ENCODE measurements at regions of chr4 and their contacts with region 1.

Region 1: DNA sequence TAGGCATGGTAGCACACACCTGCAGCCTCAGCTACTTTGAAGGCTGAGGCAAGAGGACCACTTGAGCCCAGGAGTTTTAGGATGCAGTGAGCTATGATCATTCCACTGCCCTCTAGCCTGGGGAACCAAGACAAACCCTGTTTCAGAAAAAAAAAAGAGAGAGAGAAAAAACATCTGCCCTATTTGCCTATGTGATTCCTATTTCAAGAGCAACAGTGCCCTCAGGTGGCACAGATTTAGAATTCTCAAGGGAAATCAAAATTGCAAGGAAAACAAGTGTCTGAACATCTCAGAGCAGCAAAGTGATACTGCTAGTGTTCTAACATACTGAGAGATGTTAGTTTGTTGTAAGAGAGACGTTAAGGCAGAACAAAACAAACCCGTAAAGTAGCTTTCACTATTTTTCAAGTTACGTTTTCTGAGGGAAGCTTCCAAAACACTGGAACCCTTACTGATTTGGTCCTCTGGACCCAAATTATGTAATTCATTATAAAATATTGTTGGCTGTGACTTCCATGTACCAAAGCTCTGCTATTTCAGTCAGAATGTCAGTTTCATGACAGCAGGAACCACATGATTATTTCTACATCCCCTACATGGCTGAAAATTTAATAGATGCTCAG is 7.9 kb downstream of the BDH2 start:
- DNase-seq: no peak
- ATAC-seq: no peak
- H3K4me3 ChIP-seq: no peak overlapping the region
- H3K27ac ChIP-seq: no peak overlapping the region
- H3K4me1 ChIP-seq: peaks cover 0 to 14% (median 0%) of the 10 kb centered on the region in 12 donors
- H3K27me3 ChIP-seq: no peaks in the 10 kb centered on the region
- CTCF ChIP-seq: peak in 11 of 12 donors; percentile 12 to 55 (median 42)
- POLR2A ChIP-seq: no peak

Region 2: GRCh38 chr4:102610007-102610406 is 481.7 kb before region 1 on chr4:
- intact Hi-C with region 1: loop called in 3 of 10 experiments (anchors 5 to 10 kb)
- DNase-seq: no peak
- ATAC-seq: no peak
- H3K4me3 ChIP-seq: no peak overlapping the region
- H3K27ac ChIP-seq: no peak overlapping the region
- H3K4me1 ChIP-seq: peaks cover 0 to 31% (median 0%) of the 10 kb centered on the region in 12 donors
- H3K27me3 ChIP-seq: no peaks in the 10 kb centered on the region
- CTCF ChIP-seq: peak in 4 of 12 donors; percentile 15 to 25 (median 16)
- POLR2A ChIP-seq: no peak

Region 3: GRCh38 chr4:102819588-102820365 is 271.9 kb before region 1 on chr4:
- intact Hi-C with region 1: loop called in 1 of 10 experiments (anchors 5 kb)
- DNase-seq: no peak
- ATAC-seq: peak in 1 of 4 donors; percentile 23
- H3K4me3 ChIP-seq: peak overlapping the region in 5 of 12 donors; percentile 2 to 25 (median 18)
- H3K27ac ChIP-seq: peak overlapping the region in 10 of 12 donors; percentile 1 to 55 (median 27)
- H3K4me1 ChIP-seq: peaks cover 15 to 100% (median 97%) of the 10 kb centered on the region in 12 donors
- H3K27me3 ChIP-seq: no peaks in the 10 kb centered on the region
- CTCF ChIP-seq: no peak
- POLR2A ChIP-seq: no peak

Region 4: GRCh38 chr4:102959498-102959897 is 132.2 kb before region 1 on chr4:
- intact Hi-C with region 1: no loop called
- DNase-seq: peak in 2 of 5 donors; percentile 34 to 44
- ATAC-seq: peak in 2 of 4 donors; percentile 49 to 64
- H3K4me3 ChIP-seq: no peak overlapping the region
- H3K27ac ChIP-seq: no peak overlapping the region
- H3K4me1 ChIP-seq: no peaks in the 10 kb centered on the region
- H3K27me3 ChIP-seq: no peaks in the 10 kb centered on the region
- CTCF ChIP-seq: no peak
- POLR2A ChIP-seq: no peak

Measured in heart left ventricle (tissue), 16 donors.